ENCODE measurements at regions of chr11 and their contacts with region 1.

Region 1: GRCh38 chr11:8209208-8209807 is 40.5 kb upstream of the RIC3 start:
- DNase-seq: peak in 2 of 3 donors; percentile 31 to 48
- H3K4me3 ChIP-seq: no peak overlapping the region
- H3K27ac ChIP-seq: no peak overlapping the region
- H3K4me1 ChIP-seq: peaks cover 12 to 51% (median 41%) of the 10 kb centered on the region in 4 experiments
- H3K27me3 ChIP-seq: no peaks in the 10 kb centered on the region

Region 2: DNA sequence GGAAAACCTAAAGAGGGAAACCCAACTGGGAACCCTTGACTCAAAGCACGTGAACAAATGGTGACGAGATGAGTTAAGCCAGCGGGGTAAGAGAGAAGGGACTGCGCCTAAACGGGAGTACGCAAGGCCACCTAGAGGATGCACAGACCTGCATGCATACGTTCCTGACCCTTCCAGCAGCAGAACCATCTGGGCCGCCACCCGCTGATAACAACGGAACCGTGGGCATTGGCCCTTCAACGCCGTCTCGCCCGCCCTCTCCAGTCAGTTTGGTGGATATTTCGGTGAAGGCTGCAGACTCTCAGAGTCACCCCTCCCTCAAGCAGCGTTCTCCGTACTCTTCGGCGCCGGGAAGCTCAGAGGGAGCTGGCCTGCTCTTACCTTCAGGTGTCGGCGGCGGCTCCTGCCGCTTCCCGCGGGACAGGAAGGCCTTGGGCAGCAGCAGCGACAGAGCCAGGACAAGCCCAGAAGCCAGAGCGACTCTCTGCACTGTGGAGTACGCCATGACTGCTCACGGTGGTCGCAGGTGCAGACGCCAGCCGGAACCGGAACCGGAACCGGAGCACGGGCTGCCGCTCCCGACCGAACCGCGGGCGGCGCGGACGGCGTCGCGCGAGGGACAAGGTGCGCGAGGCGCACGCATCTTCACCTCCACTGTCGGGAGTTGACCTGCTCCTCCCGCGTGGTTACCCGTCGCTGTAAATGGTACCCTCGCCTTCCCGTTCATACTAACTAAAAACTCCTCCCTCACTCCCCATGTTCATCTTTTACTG is 40.6 kb before region 1 on chr11 and contains the start of gene RIC3:
- CTCF ChIA-PET with region 1: no interaction called
- POLR2A ChIA-PET with region 1: no interaction called
- DNase-seq: peak; percentile 25 to 53 (median 48)
- H3K4me3 ChIP-seq: peak within 1 kb of the TSS; percentile 15 to 88 (median 71)
- H3K27ac ChIP-seq: no peak within 1 kb of the TSS
- H3K4me1 ChIP-seq: peaks cover 0 to 20% (median 9%) of the 10 kb centered on the region in 4 experiments
- H3K27me3 ChIP-seq: peaks cover 2 to 35% (median 22%) of the 10 kb centered on the region in 5 experiments

Region 3: GRCh38 chr11:8180469-8180868 is 28.8 kb before region 1 on chr11:
- CTCF ChIA-PET with region 1: no interaction called
- POLR2A ChIA-PET with region 1: no interaction called
- DNase-seq: no peak
- H3K4me3 ChIP-seq: no peak overlapping the region
- H3K27ac ChIP-seq: no peak overlapping the region
- H3K4me1 ChIP-seq: no peaks in the 10 kb centered on the region
- H3K27me3 ChIP-seq: peaks cover 0 to 27% (median 7%) of the 10 kb centered on the region in 5 experiments

Region 4: GRCh38 chr11:8225589-8226036 is 16.3 kb after region 1 on chr11:
- CTCF ChIA-PET with region 1: interaction called, 23 read pairs
- POLR2A ChIA-PET with region 1: no interaction called
- DNase-seq: peak; percentile 71 to 82 (median 71)
- H3K4me3 ChIP-seq: no peak overlapping the region
- H3K27ac ChIP-seq: no peak overlapping the region
- H3K4me1 ChIP-seq: peaks cover 0 to 18% (median 15%) of the 10 kb centered on the region in 4 experiments
- H3K27me3 ChIP-seq: peaks cover 0 to 20% (median 2%) of the 10 kb centered on the region in 5 experiments